Activated CD4-positive, alpha-beta memory T cell treated with anti-CD3 and anti-CD28 coated beads for 36 hours (primary cell): ENCODE measurements at regions of chr5 and their contacts with region 1.

Region 1: DNA sequence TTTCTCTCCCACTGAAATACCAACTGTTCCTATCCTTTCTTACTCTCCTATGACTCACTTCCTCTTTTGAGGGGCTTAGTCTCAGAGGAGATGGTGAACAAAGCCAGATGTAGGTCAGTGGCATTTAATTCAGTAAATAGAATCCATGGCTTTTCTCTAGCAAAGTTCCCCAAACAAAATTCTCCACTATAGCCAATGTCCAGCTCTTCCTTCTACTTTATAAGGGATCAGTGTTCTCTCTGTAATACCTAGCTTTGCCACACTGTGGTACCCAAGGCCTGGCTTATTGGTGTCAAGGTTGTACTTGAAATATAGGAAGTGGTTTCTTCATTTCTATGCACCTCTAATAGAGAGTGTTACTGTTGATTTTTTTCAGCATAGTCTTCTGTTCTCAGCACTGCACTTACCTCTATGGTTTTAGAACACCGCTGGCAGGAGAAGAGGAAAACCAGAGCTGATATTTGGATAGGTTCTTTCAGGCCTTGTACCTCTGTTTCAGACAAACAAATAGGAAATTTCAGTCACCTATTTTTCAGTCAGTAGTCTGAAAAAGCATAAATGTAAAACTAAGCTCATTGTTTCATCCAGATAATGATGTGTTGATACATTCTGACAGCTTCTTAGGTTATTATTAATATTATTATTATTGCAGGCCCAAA is 40.6 kb upstream of the ITGA2 start:
- DNase-seq: peak; percentile 74
- H3K4me3 Mint-ChIP-seq: no peak overlapping the region
- H3K27ac Mint-ChIP-seq: no peak overlapping the region
- H3K4me1 Mint-ChIP-seq: peaks cover 9% of the 10 kb centered on the region
- H3K27me3 Mint-ChIP-seq: no peaks in the 10 kb centered on the region

Region 2: DNA sequence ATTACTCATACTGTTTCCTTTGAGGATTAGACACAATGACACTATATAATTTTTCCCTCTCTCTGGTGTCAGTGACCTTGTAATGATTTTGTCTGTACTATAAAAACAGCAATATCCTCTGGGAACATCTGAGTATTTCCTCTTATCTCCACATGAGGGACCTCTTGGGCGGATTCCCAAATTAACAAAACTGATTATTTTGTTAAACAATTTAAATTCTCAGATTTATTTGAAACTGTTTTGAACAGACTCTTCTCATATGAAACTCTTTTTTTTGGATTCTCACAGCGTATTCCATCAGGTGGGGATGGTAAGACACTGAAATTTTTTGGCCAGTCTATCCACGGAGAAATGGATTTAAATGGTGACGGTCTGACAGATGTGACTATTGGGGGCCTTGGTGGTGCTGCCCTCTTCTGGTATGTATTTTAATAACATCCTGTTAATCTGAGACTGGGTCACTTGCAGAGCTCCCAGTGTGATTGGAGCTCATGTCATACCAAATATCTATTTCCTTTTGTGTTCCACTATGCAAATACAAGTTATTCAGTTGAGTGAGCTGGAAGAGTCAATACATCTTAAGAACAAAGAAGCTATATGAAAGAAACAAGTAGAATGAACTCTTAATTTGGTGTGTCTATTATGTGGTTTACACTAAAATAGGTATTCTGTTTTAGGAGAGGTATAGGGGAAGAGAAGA is 33.2 kb before region 1 on chr5:
- CTCF ChIA-PET with region 1: interaction called, 7 read pairs
- POLR2A ChIA-PET with region 1: no interaction called
- intact Hi-C with region 1: loop called (anchors 1 kb)
- DNase-seq: peak; percentile 52
- H3K4me3 Mint-ChIP-seq: peak overlapping the region; percentile 36
- H3K27ac Mint-ChIP-seq: no peak overlapping the region
- H3K4me1 Mint-ChIP-seq: peaks cover 6% of the 10 kb centered on the region
- H3K27me3 Mint-ChIP-seq: no peaks in the 10 kb centered on the region

Region 3: GRCh38 chr5:52989781-52990527 is 41.4 kb after region 1 on chr5:
- CTCF ChIA-PET with region 1: interaction called, 16 read pairs
- POLR2A ChIA-PET with region 1: no interaction called
- intact Hi-C with region 1: loop called (anchors 1 kb)
- DNase-seq: peak; percentile 55
- H3K4me3 Mint-ChIP-seq: peak overlapping the region; percentile 73
- H3K27ac Mint-ChIP-seq: no peak overlapping the region
- H3K4me1 Mint-ChIP-seq: peaks cover 26% of the 10 kb centered on the region
- H3K27me3 Mint-ChIP-seq: peaks cover 9% of the 10 kb centered on the region

Region 4: GRCh38 chr5:53069626-53070025 is 121.1 kb after region 1 on chr5:
- CTCF ChIA-PET with region 1: interaction called, 11 read pairs
- POLR2A ChIA-PET with region 1: no interaction called
- intact Hi-C with region 1: no loop called
- DNase-seq: peak; percentile 86
- H3K4me3 Mint-ChIP-seq: no peak overlapping the region
- H3K27ac Mint-ChIP-seq: peak overlapping the region; percentile 10
- H3K4me1 Mint-ChIP-seq: peaks cover 18% of the 10 kb centered on the region
- H3K27me3 Mint-ChIP-seq: peaks cover 7% of the 10 kb centered on the region

Region 5: GRCh38 chr5:53095931-53096525 is 147.5 kb after region 1 on chr5:
- CTCF ChIA-PET with region 1: interaction called, 194 read pairs
- POLR2A ChIA-PET with region 1: interaction called, 4 read pairs
- intact Hi-C with region 1: loop called (anchors 1 kb)
- DNase-seq: peak; percentile 78
- H3K4me3 Mint-ChIP-seq: no peak overlapping the region
- H3K27ac Mint-ChIP-seq: no peak overlapping the region
- H3K4me1 Mint-ChIP-seq: no peaks in the 10 kb centered on the region
- H3K27me3 Mint-ChIP-seq: no peaks in the 10 kb centered on the region

Region 6: DNA sequence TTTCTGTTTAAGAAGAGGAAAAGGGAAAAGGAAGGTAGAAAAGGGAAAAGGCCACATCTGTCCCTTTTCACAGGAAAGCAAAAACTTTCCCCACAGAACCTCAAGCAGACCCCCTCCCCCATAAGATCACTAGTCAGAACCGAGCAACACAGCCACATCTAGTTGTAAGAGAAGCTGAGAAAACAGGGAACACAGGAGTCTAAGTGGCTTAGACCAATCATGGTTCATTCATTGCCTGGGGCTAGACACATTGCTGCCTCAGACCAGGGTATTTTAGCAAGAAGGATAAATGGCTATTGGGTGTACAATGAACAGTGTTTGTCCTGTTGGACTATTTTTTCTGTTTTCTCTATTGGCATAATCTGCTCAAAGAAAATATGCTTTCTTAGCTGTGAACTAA is 1263.8 kb after region 1 on chr5:
- CTCF ChIA-PET with region 1: no interaction called
- POLR2A ChIA-PET with region 1: no interaction called
- intact Hi-C with region 1: loop called (anchors 5 kb)
- DNase-seq: no peak
- H3K4me3 Mint-ChIP-seq: no peak overlapping the region
- H3K27ac Mint-ChIP-seq: no peak overlapping the region
- H3K4me1 Mint-ChIP-seq: peaks cover 4% of the 10 kb centered on the region
- H3K27me3 Mint-ChIP-seq: no peaks in the 10 kb centered on the region